Right cardiac atrium (tissue), 5 donors: ENCODE measurements at regions of chr22 and their contacts with region 1.

Region 1: DNA sequence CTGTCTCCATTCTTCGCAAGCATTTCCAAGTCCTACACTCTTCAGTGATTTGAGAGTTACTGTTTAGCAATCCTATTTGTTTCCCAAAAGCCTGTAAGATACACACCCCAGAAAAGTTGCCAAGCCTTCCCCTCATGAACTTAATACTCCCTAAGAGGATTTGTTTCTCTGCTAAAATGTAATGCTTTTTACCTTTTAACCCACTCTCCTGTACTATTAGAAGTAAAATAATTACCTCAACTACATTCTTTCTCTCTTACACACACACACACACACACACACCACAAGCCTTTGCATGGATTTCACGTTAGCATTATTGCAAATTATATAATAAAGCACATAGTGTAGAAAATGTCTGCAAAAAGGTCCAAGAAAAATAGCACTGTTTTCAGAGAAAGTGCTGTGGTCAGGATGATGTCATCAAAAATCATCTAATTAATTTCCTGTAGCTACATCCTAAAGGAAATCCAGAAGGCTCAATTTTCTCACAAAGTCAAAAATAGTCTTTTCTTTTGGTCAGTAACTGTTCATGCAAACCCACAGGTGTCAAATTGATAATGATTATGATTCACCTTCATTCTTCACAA is 364.1 kb upstream of the PITPNB start:
- DNase-seq: no peak
- ATAC-seq: peak in 1 of 2 donors; percentile 73
- H3K4me3 ChIP-seq: no peak overlapping the region
- H3K27ac ChIP-seq: no peak overlapping the region
- H3K4me1 ChIP-seq: no peaks in the 10 kb centered on the region
- H3K27me3 ChIP-seq: no peaks in the 10 kb centered on the region

Region 2: DNA sequence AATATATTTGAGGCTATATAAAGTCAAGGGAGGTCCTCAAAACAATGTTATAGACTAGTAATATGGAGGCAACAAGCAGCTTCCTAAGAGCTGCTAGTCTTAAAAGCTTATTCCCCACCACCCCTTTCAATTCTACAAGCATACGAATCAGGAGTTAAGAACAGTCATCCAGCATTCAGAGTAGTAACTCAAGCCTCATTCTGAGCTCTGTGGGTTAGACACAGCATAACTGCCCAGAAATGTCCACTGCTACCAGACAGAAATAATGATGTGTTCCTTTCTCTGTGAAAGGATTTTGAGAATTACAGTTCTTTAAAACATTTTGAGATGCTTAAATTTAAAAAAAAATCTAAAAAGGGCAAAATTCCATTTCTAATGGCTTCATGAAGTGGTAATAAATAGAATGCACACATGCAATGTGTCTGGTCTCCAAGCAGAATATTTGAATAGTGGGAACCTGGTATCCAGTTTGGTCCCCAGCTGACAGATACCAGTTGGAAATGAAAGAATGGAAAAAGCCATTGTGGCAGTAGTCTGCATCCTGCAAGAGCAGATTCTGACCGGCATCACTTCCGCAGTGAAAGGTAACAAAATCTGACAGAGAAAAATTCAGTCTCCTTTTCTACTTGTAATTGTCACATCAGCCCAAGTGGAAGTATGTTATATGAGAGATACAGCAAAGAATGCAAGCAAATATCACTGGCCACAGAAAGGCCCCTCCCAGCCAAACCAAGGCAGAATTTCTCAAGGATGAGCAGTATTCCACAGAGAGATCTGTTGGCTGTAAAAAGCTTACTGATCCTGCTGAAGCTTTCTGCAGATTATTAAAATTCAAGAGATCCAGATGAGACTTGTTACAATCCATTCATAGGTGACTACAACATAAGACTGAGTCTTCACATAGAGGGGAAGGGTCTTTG is 53.3 kb before region 1 on chr22:
- intact Hi-C with region 1: loop called in 1 of 4 experiments (anchors 10 kb)
- DNase-seq: no peak
- ATAC-seq: peak in 1 of 2 donors; percentile 34
- H3K4me3 ChIP-seq: no peak overlapping the region
- H3K27ac ChIP-seq: no peak overlapping the region
- H3K4me1 ChIP-seq: no peaks in the 10 kb centered on the region
- H3K27me3 ChIP-seq: no peaks in the 10 kb centered on the region

Region 3: DNA sequence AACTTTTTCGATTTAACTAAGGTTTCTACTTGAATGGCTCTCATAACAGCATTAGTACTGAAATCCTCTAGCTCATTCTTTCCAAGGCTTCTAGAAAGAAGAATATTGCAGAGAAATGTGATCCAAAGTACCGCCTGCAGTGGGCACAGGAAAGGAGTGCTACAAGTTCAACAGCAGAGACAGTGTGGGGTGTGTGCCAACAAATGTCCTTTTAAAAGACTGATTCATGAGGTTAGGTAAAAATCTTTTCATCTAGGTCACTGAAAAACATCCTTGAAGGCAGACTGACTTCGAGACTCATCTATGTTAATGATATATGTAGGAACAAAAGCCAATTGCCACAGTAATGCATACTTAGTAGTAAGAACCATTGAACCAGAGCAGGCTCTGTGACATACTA is 15.0 kb before region 1 on chr22:
- intact Hi-C with region 1: loop called in 1 of 4 experiments (anchors 2 kb)
- DNase-seq: no peak
- ATAC-seq: no peak
- H3K4me3 ChIP-seq: no peak overlapping the region
- H3K27ac ChIP-seq: no peak overlapping the region
- H3K4me1 ChIP-seq: peaks cover 3% of the 10 kb centered on the region
- H3K27me3 ChIP-seq: no peaks in the 10 kb centered on the region